ENCODE measurements at regions of chr11 and their contacts with region 1.

Region 1: DNA sequence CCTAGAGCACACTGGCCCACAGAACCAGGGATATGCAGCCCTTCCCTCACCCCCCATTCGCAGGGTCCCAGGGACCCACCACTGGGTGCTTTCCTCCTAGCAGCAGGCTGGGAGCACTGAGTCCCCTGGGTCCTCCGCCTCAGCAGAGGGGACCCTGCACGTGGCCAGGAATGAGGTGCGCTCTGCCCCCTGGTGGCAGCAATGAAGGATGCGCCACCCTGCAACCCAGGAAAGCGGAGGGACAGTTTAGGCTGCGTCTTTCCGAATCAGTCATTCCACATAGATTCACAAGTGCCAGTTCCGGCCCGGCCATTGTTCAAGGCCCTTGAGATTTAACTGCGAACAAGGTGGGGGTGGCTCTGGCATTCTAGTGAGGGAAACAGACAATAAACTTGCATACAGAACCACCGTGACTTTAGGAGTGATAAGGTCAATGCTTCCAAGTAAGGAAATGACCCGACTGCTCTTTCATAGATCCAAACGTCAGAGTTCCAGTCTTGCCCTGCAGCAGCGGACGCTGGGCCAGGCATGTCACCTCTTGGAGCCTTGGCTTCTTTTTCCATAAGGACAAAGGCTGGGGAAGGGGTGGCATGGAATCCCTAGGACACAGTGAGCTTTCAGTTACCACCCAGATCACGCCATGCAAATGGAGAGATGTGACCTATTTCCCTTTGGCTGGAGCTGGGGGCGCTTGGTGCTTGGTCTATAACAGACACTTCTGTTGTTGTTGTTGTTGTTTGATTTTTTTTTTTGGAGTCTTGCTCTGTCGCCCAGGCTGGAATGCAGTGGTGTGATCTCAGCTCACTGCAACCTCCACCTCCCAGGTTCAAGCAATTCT is 7.7 kb downstream of the RIN1 start:
- DNase-seq: peak; percentile 76
- ATAC-seq: peak; percentile 79 to 87

Region 2: GRCh38 chr11:66277471-66278362 is 50.8 kb before region 1 on chr11 and contains the start of gene CNIH2:
- intact Hi-C with region 1: no loop called
- DNase-seq: no peak
- ATAC-seq: peak; percentile 14 to 51
- total RNA-seq, gene CNIH2: not detected

Region 3: GRCh38 chr11:66288671-66289547 is 39.6 kb before region 1 on chr11 and contains the start of gene YIF1A:
- intact Hi-C with region 1: no loop called
- DNase-seq: peak; percentile 99
- ATAC-seq: peak; percentile 94 to 97
- total RNA-seq, gene YIF1A: 53.2 to 81.1 TPM

Region 4: GRCh38 chr11:66311965-66312548 is 16.5 kb before region 1 on chr11:
- intact Hi-C with region 1: loop called in 1 of 2 experiments (anchors 1 kb)
- DNase-seq: peak; percentile 94
- ATAC-seq: peak; percentile 79 to 86

Region 5: DNA sequence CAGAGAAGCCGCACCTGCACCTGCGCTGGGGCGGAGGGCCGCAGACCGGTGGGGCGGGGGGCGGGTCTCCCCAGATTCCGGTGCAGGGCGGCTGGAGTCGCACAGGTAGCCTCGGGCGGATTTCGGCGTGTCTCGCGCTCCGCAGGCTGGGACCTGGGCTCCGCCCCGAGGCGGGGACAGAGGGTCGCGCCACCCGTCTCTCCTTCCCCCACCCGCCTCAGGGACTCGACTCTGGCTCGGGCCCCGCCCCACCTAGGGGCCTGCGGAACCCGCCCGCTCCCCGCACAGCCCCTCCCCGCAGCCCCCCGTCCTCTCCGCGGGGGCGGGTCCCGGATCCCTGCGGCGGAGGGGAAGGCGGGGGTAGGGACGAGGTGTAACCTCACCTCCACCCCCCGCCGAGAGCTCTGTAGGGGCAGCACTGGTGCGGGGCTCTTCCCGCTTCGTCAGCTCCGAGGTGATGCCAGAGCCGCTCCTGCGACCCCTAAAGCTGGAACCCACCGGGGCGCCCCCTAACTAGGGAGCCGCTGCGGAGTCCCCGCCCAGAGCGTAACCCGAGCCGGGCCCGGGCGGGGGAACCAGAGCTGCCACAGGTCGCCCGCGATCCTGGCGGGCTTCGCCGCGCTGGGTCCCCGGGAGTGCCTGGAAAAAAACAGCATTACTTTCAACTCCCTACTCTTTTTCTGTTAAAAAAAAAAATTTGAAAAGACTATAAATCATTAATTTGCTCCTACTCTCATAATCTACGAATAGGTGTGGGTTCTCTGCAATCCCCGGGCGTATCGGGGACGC is 43.3 kb after region 1 on chr11 and contains the start of gene SLC29A2:
- intact Hi-C with region 1: no loop called
- DNase-seq: peak; percentile 73
- ATAC-seq: peak; percentile 82 to 84
- total RNA-seq, gene SLC29A2: 15.1 to 16.6 TPM